Heart left ventricle (tissue), 16 donors: ENCODE measurements at regions of chr19 and their contacts with region 1.

Region 1: DNA sequence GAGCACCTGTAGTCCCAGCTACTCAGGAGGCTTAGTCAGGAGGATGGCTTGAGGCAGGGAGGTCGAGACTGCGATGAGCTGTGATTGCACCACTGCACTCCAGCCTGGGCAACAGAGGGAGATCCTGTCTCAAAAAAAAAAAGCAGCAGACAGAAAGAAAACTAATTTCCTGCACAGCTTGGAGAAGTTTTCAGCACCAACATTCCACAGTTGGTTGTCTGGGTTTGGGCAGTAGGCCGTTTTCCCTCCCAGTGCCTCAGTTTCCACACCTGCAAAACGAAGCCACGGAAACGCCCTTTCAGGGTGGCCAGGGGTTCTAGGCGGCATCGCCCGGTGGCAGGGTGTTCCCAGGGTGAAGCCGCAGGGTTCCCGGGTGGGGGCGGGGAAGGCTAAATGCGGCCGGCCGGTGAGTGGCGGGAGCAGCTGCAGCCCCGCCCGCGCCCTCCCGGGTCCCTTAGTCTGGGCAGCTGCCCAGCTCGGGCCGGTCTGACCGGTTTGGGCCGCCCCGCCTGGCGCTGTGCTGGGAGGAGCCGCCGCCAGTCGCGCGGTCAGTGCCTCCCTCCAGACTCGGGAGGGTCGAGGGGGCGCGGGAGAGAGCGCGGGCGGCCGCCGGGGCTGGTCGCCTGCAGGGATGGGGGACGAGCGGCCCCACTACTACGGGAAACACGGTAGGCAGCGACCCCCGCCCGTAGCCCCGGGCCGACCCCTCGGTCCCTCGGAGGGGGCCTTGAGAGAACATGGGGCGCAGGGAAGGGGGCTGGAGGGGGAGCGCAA is at the start of gene SLC44A2:
- DNase-seq: peak; percentile 87 to 89 (median 89)
- ATAC-seq: peak; percentile 95 to 99 (median 98)
- H3K4me3 ChIP-seq: peak within 1 kb of the TSS; percentile 41 to 83 (median 65)
- H3K27ac ChIP-seq: peak within 1 kb of the TSS in 11 of 12 donors; percentile 63 to 94 (median 79)
- H3K4me1 ChIP-seq: peaks cover 0 to 30% (median 16%) of the 10 kb centered on the region in 12 donors
- H3K27me3 ChIP-seq: no peaks in the 10 kb centered on the region
- CTCF ChIP-seq: no peak
- POLR2A ChIP-seq: peak in 1 of 2 donors; percentile 48
- total RNA-seq, gene SLC44A2: 63.8 to 130 (median 91.9) TPM

Region 2: GRCh38 chr19:10612491-10613119 is 12.6 kb before region 1 on chr19:
- intact Hi-C with region 1: loop called in 1 of 10 experiments (anchors 1 kb)
- DNase-seq: peak; percentile 87 to 94 (median 87)
- ATAC-seq: peak; percentile 98 to 99 (median 99)
- H3K4me3 ChIP-seq: peak overlapping the region in 1 of 12 donors; percentile 23
- H3K27ac ChIP-seq: peak overlapping the region; percentile 42 to 85 (median 78)
- H3K4me1 ChIP-seq: peaks cover 7 to 54% (median 36%) of the 10 kb centered on the region in 12 donors
- H3K27me3 ChIP-seq: no peaks in the 10 kb centered on the region
- CTCF ChIP-seq: no peak
- POLR2A ChIP-seq: no peak